ENCODE measurements at regions of chr3 and their contacts with region 1.

Region 1: GRCh38 chr3:56801662-56802377 is at the start of gene ARHGEF3:
- DNase-seq: peak; percentile 85 to 92 (median 89)
- H3K4me3 ChIP-seq: peak within 1 kb of the TSS; percentile 62 to 94 (median 72)
- H3K27ac ChIP-seq: peak within 1 kb of the TSS; percentile 37 to 87 (median 74)
- H3K4me1 ChIP-seq: peaks cover 30 to 32% of the 10 kb centered on the region in 2 donors
- H3K27me3 ChIP-seq: no peaks in the 10 kb centered on the region
- CTCF ChIP-seq: peak in 5 of 6 experiments; percentile 25 to 44 (median 38)
- POLR2A ChIP-seq: peak; percentile 87 to 96
- total RNA-seq, gene ARHGEF3: 31.6 to 110 (median 62.9) TPM

Region 2: DNA sequence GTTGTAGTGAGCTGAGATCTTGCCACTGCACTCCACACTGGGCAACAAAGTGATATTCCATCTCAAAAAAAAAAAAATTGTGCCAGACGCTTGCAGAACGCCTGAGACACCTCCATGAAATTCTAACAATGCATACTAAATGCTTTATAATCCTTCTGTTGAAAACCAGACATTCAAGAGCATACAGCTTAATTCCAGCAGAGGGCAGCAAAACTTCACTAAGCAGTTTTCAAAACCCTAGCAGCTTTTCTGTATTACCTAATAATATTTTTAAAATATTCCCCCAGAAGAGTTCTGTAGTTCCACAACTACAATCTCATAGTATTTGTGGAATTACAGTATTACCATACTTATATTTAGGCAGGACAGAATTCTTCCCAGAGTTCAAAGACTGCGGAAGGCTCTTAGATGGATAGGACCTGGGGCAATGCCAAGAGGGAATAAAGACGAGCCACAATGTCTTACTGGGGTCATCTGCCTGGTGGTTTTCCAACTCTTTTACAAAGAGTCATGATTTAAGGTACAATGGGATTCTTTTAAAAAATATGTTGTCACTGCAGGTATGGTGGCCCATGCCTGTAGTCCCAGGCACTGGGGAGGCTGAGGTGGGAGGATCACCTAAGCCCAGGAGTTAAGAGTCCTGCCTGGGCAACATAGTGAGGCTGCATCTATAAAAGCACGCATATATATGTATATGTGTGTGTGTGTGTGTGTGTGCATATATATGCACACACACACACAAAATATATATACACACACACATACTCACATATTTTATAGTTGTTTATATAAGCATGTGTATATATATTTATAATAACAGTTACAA is 99.1 kb before region 1 on chr3:
- intact Hi-C with region 1: loop called (anchors 5 kb)
- DNase-seq: peak in 6 of 7 donors; percentile 40 to 76 (median 60)
- H3K4me3 ChIP-seq: no peak overlapping the region
- H3K27ac ChIP-seq: no peak overlapping the region
- H3K4me1 ChIP-seq: peaks cover 0 to 4% of the 10 kb centered on the region in 2 donors
- H3K27me3 ChIP-seq: no peaks in the 10 kb centered on the region
- CTCF ChIP-seq: peak; percentile 83 to 95 (median 90)
- POLR2A ChIP-seq: no peak

Region 3: GRCh38 chr3:56976651-56977560 is 175.1 kb after region 1 on chr3:
- intact Hi-C with region 1: loop called in 1 of 2 experiments (anchors 5 kb)
- DNase-seq: peak; percentile 53 to 88 (median 79)
- H3K4me3 ChIP-seq: no peak overlapping the region
- H3K27ac ChIP-seq: peak overlapping the region; percentile 45 to 88 (median 69)
- H3K4me1 ChIP-seq: peaks cover 21 to 31% of the 10 kb centered on the region in 2 donors
- H3K27me3 ChIP-seq: no peaks in the 10 kb centered on the region
- CTCF ChIP-seq: no peak
- POLR2A ChIP-seq: no peak

Region 4: DNA sequence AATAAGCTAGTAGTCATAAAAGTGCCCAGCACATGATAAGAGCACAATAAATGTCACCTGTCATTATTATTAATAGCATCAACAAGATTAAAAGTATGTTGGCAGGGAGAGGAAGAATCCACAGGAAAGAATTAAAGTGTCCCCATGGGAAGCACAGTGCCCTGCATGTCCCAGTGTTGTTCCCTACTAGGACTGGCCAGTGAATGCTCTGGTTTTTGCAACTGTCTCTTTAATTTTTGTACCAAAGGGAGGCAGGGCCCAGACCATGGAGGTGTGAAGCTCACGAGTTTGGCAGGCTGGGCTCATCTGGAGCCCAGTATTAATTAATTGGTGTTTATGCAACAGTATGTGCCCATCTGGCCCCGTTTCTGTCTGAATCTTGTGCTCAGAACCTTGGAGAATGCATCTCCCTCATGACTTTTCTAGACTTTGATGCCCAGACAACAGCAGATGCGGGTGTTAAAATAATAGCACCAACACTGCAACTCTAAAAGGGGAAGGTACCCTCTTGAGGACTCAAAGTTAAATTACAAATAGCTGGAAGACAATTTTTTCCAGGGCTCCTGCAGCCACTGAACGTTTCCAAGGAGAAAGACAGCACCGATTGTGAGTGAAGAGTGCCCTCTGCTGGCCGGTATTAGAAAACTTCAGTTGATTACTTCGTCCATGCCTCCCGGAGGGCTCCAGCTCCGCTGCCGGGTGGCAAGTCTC is 186.8 kb after region 1 on chr3:
- intact Hi-C with region 1: loop called (anchors 5 kb)
- DNase-seq: peak; percentile 76 to 94 (median 84)
- H3K4me3 ChIP-seq: no peak overlapping the region
- H3K27ac ChIP-seq: no peak overlapping the region
- H3K4me1 ChIP-seq: peaks cover 0 to 8% of the 10 kb centered on the region in 2 donors
- H3K27me3 ChIP-seq: no peaks in the 10 kb centered on the region
- CTCF ChIP-seq: peak; percentile 80 to 95 (median 86)
- POLR2A ChIP-seq: no peak

Measured in adrenal gland (tissue), 19 donors.